ENCODE measurements at regions of chr2 and their contacts with region 1.

Region 1: DNA sequence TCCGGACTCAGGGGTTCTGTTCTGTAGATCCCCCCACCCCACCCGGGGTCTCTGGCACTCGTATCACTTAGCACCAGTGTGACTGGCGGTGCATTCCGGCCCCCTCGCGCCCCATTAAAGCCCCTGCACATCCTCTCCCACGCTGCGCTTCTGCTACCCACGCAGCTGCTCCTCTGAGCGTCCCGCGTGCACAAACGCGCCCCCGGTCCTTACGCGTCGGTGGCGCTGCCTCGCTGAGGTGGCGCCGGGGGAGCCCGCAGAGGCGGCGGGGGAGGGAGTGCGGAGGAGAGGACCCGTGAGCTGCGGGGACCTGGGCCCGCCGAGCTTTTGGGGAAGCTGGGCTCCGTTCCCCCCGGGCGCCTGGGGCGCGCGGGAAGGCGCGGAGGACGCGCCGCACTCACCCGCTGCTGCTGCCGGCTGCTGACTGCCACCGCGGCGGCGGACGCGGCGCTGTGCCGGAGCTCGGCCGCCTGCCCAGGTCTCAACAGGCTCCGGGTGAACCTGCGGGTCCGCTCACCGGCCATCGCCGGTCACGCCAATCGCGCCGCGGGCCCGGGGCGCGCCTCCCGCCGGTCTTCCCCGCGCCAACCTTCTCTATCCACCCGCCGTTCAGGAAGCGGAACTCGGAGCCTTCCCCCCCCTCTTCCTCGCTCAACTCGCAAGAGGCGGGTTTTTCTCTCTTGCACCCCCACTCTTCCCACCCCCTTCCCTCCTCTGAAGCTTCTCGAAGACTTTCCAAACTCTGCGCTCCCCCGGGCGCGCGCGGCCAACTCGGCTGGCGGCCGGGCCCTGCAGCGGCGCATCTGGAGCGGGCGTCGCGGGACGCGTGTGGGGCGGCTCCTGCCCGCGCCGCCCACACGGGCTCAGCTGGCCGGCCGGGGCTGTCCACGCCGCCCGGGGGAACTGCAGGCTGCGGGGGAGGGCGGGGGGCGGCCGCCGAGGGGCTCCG is at the start of gene DOCK10:
- DNase-seq: peak; percentile 35
- ATAC-seq: peak; percentile 39
- H3K4me3 ChIP-seq: peak within 1 kb of the TSS; percentile 86
- H3K27ac ChIP-seq: peak within 1 kb of the TSS; percentile 7
- H3K4me1 ChIP-seq: peaks cover 10% of the 10 kb centered on the region; the same call in 1 of the 2 replicates
- H3K27me3 ChIP-seq: no peaks in the 10 kb centered on the region
- CTCF ChIP-seq: no peak; the same call in 1 of the 2 replicates
- total RNA-seq, gene DOCK10: 23.1 and 38.5 TPM in 2 replicates

Region 2: GRCh38 chr2:225076125-225076524 is 34.0 kb after region 1 on chr2:
- CTCF ChIA-PET with region 1: no interaction called
- POLR2A ChIA-PET with region 1: interaction called, 10 read pairs
- intact Hi-C with region 1: no loop called
- DNase-seq: no peak
- ATAC-seq: no peak
- H3K4me3 ChIP-seq: no peak overlapping the region
- H3K27ac ChIP-seq: no peak overlapping the region
- H3K4me1 ChIP-seq: no peaks in the 10 kb centered on the region
- H3K27me3 ChIP-seq: no peaks in the 10 kb centered on the region
- CTCF ChIP-seq: no peak

Region 3: GRCh38 chr2:225100856-225101294 is 58.8 kb after region 1 on chr2:
- CTCF ChIA-PET with region 1: no interaction called
- POLR2A ChIA-PET with region 1: interaction called, 12 read pairs
- intact Hi-C with region 1: loop called (anchors 5 kb)
- DNase-seq: peak; percentile 94
- ATAC-seq: peak; percentile 58
- H3K4me3 ChIP-seq: peak overlapping the region; percentile 46
- H3K27ac ChIP-seq: peak overlapping the region; percentile 98
- H3K4me1 ChIP-seq: peaks cover 71% of the 10 kb centered on the region
- H3K27me3 ChIP-seq: no peaks in the 10 kb centered on the region
- CTCF ChIP-seq: no peak